Dendritic cell treated with granulocyte-macrophage colony-stimulating factor and Interleukin-4, amounts not matched to agents 40 ng/mL and 50 ng/mL, for 4 days (primary cell): ENCODE measurements at regions of chr2 and their contacts with region 1.

Region 1: GRCh38 chr2:182650704-182651103 is 65.4 kb upstream of the DNAJC10 start:
- H3K4me3 Mint-ChIP-seq: no peak overlapping the region
- H3K27ac Mint-ChIP-seq: no peak overlapping the region
- H3K4me1 Mint-ChIP-seq: no peaks in the 10 kb centered on the region
- H3K27me3 Mint-ChIP-seq: no peaks in the 10 kb centered on the region

Region 2: DNA sequence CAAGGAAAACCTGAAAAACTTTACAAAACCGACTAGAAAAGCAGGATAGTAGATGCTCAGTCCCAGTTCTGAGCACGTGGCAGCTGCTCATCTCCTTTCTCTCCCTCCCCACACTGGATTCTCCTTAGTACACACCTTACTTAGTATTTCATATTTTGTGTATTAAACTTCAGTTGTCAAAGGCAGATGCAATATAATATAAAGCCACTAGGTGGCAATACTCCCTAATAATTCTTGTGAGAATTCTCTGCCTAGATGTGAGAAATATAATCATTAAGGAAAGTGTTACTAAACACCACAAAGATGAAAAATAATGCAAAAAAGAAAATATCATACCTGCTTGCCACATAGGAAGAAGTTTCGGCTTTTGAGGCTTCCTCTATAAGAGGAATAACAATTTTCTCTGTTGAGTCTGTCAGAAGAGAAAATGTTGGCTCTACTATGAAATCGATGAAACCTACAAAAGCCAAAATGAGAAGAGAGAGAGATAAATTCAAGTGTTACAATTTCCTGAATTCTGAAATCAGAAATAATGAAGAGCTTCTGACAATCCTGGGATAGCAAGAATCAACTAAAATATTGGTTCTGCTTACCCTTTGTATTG is 464.5 kb before region 1 on chr2:
- intact Hi-C with region 1: loop called (anchors 1 kb)
- H3K4me3 Mint-ChIP-seq: no peak overlapping the region
- H3K27ac Mint-ChIP-seq: no peak overlapping the region
- H3K4me1 Mint-ChIP-seq: no peaks in the 10 kb centered on the region
- H3K27me3 Mint-ChIP-seq: no peaks in the 10 kb centered on the region